ENCODE measurements at regions of chr14 and their contacts with region 1.

Region 1: GRCh38 chr14:96362965-96363756 is at the starts of genes ATG2B and GSKIP:
- DNase-seq: peak; percentile 99
- ATAC-seq: peak; percentile 79
- H3K4me3 Mint-ChIP-seq: peak within 1 kb of the TSS; percentile 86
- H3K27ac Mint-ChIP-seq: peak within 1 kb of the TSS; percentile 90
- H3K4me1 Mint-ChIP-seq: peaks cover 55% of the 10 kb centered on the region
- H3K27me3 Mint-ChIP-seq: no peaks in the 10 kb centered on the region
- total RNA-seq, gene ATG2B: 13.5 to 17.6 TPM
- total RNA-seq, gene GSKIP: 12.1 to 20.7 TPM

Region 2: GRCh38 chr14:96038920-96039632 is 324.1 kb before region 1 on chr14 and contains the start of gene C14orf132:
- CTCF ChIA-PET with region 1: no interaction called
- POLR2A ChIA-PET with region 1: no interaction called
- intact Hi-C with region 1: loop called in 1 of 2 experiments (anchors 1 kb)
- DNase-seq: peak; percentile 86
- ATAC-seq: peak; percentile 90
- H3K4me3 Mint-ChIP-seq: peak within 1 kb of the TSS; percentile 76
- H3K27ac Mint-ChIP-seq: peak within 1 kb of the TSS; percentile 63
- H3K4me1 Mint-ChIP-seq: peaks cover 15% of the 10 kb centered on the region
- H3K27me3 Mint-ChIP-seq: peaks cover 20% of the 10 kb centered on the region
- total RNA-seq, gene C14orf132: 4.1 to 4.3 TPM

Region 3: GRCh38 chr14:96391293-96392118 is 28.3 kb after region 1 on chr14:
- CTCF ChIA-PET with region 1: interaction called, 3 read pairs
- POLR2A ChIA-PET with region 1: no interaction called
- intact Hi-C with region 1: loop called (anchors 1 kb)
- DNase-seq: peak; percentile 100
- ATAC-seq: peak; percentile 97
- H3K4me3 Mint-ChIP-seq: peak overlapping the region; percentile 85
- H3K27ac Mint-ChIP-seq: peak overlapping the region; percentile 84
- H3K4me1 Mint-ChIP-seq: peaks cover 8% of the 10 kb centered on the region
- H3K27me3 Mint-ChIP-seq: peaks cover 8% of the 10 kb centered on the region

Region 4: GRCh38 chr14:96501742-96502617 is 138.8 kb after region 1 on chr14 and contains the start of gene PAPOLA:
- CTCF ChIA-PET with region 1: no interaction called
- POLR2A ChIA-PET with region 1: no interaction called
- intact Hi-C with region 1: loop called (anchors 1 kb)
- DNase-seq: peak; percentile 96
- ATAC-seq: peak; percentile 95
- H3K4me3 Mint-ChIP-seq: peak within 1 kb of the TSS; percentile 99
- H3K27ac Mint-ChIP-seq: peak within 1 kb of the TSS; percentile 98
- H3K4me1 Mint-ChIP-seq: peaks cover 31% of the 10 kb centered on the region
- H3K27me3 Mint-ChIP-seq: peaks cover 6% of the 10 kb centered on the region
- total RNA-seq, gene PAPOLA: 190 to 205 TPM